Mammary epithelial cell (primary cell): ENCODE measurements at regions of chr4 and their contacts with region 1.

Region 1: GRCh38 chr4:168654104-168654847 is 157.4 kb downstream of the PALLD start:
- DNase-seq: peak; percentile 66
- H3K4me3 ChIP-seq: peak overlapping the region; percentile 11 to 52 (median 49)
- H3K27ac ChIP-seq: peak overlapping the region; percentile 78
- H3K4me1 ChIP-seq: peaks cover 32% of the 10 kb centered on the region
- H3K27me3 ChIP-seq: no peaks in the 10 kb centered on the region
- CTCF ChIP-seq: no peak

Region 2: DNA sequence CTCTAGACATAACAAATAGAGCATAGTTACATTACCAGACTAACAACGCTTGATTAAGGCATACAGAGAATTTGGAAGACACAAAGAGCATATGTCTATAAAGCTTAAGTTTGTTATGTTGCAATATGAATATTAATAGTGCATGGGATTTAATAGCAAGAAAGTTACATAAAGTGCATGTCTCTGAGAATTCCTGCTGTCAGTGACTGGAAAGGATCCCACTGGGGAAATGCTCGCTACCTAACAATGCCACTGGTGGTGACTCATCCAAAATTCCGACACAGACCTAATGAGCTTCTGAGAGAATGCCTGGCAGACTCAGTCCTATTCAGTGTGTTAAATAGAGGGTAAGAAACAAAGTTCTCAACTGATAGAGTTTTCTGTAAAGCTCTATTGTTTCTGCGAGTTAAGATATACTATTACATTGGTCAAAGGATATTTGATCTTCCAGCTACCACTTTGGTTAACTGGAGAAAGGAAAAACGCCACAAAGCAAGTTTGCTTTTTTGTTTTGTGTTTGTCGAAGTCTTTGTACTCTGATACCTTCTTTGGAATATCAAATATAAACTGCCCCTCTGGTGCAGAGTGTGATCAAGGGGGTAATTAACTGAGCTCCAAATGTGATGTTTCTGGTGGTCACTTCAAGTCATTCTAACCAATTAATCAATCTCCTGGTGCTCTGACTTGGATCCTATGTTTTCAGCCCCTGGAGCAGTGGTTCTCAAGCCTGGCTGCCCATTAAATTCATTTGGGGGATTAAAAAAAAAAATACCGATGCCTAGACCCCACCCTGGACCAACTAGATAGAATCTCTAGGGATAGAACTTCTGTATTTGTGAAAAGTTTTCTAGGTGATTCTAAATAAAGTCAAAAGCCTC is 49.5 kb before region 1 on chr4:
- CTCF ChIA-PET with region 1: no interaction called
- dilution Hi-C with region 1: no loop called
- in situ Hi-C with region 1: no loop called
- intact Hi-C with region 1: loop called (anchors 2 kb)
- DNase-seq: peak; percentile 91
- H3K4me3 ChIP-seq: no peak overlapping the region
- H3K27ac ChIP-seq: peak overlapping the region; percentile 58
- H3K4me1 ChIP-seq: peaks cover 50% of the 10 kb centered on the region
- H3K27me3 ChIP-seq: no peaks in the 10 kb centered on the region
- CTCF ChIP-seq: no peak

Region 3: GRCh38 chr4:168631241-168632162 is 22.8 kb before region 1 on chr4:
- CTCF ChIA-PET with region 1: no interaction called
- dilution Hi-C with region 1: no loop called
- in situ Hi-C with region 1: no loop called
- intact Hi-C with region 1: no loop called
- DNase-seq: peak; percentile 80
- H3K4me3 ChIP-seq: peak overlapping the region; percentile 56 to 62 (median 61)
- H3K27ac ChIP-seq: peak overlapping the region; percentile 66
- H3K4me1 ChIP-seq: peaks cover 48% of the 10 kb centered on the region
- H3K27me3 ChIP-seq: no peaks in the 10 kb centered on the region
- CTCF ChIP-seq: peak; percentile 19 to 53